ENCODE measurements at regions of chr19 and their contacts with region 1.

Region 1: DNA sequence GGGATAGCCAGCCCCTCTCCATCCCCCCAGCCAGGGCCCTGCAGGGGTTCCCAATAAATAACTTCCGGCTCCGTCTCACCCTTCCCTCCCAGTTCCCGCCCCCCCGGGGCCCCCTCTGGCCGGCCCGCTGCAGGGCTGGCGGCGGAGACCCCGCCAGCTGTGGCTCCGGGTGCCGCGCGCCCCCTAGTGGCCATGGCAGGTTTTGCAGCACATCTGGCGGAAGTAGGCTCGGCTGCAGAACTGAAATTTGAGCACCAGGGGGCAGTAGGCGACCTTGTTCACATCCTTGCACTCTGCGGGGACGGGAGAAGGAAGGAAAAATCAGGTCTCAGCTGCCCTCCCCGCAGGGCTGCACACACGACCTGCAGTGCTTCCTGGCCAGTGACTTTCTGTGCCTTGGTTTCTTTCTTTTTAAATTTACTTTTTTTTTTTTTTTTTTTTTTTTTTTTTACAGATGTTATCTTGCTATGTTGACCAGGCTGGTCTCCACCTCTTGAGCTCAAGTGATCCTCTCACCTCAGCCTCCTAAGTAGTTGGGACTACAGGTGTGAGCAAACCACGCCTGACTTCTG is 3.6 kb upstream of the MYO1F start:
- DNase-seq: peak; percentile 56
- ATAC-seq: peak; percentile 84
- H3K4me3 ChIP-seq: no peak overlapping the region
- H3K27ac ChIP-seq: no peak overlapping the region
- H3K4me1 ChIP-seq: peaks cover 23 to 24% of the 10 kb centered on the region in 2 experiments
- H3K27me3 ChIP-seq: peaks cover 7% of the 10 kb centered on the region; the same call in 1 of the 2 replicates
- CTCF ChIP-seq: peak; percentile 99 to 100 (median 100)
- POLR2A ChIP-seq: no peak
- RAD21 ChIP-seq: peak; percentile 89

Region 2: DNA sequence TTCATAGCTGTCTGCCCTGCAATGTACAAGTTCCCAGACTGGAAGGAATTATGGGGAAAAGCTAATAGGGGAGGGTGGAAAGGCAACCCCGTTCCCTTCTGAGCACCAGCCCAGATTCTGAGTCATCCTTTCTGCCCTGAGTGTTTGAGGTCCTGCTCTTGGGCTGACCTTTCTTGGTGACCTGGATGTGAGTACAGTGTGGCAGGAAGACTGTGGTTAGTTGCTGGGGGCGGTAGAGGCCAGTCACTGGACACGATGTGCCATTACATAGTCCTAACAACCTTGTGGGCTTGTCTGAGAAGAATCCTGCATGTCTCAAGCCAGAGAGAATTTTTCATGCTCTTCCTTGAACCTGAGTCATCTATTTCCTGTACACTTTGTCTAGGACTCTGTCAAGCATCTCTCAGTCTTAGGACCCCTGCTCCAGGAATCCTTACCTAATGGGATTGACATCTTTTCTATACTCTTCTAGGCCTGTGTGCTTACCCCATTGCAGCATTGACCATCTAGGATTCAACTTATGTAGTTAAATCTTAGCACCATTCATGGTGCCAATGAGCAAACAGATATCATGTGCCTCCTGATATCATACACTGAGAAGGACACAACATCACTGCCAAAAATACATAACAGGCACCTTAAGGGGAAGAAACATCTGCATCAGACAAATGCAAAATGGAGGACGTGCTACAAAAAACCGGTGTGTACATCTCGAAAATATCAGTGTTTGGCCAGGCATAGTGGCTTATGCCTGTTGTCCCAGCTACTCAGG is 225.0 kb before region 1 on chr19:
- CTCF ChIA-PET with region 1: interaction called, 41 read pairs
- POLR2A ChIA-PET with region 1: no interaction called
- RAD21 ChIA-PET with region 1: interaction called in 1 of 2 experiments, 4 read pairs
- intact Hi-C with region 1: loop called (anchors 5 kb)
- DNase-seq: peak; percentile 70
- ATAC-seq: peak; percentile 73
- H3K4me3 ChIP-seq: peak overlapping the region in 1 of 2 experiments; percentile 6; a peak in 2 of 4 replicates
- H3K27ac ChIP-seq: peak overlapping the region; percentile 34
- H3K4me1 ChIP-seq: peaks cover 32 to 62% of the 10 kb centered on the region in 2 experiments
- H3K27me3 ChIP-seq: no peaks in the 10 kb centered on the region
- CTCF ChIP-seq: no peak
- POLR2A ChIP-seq: no peak
- RAD21 ChIP-seq: peak; percentile 54

Region 3: GRCh38 chr19:8526345-8527067 is 54.3 kb before region 1 on chr19:
- CTCF ChIA-PET with region 1: interaction called, 10 read pairs
- POLR2A ChIA-PET with region 1: no interaction called
- RAD21 ChIA-PET with region 1: interaction called in 1 of 2 experiments, 4 read pairs
- intact Hi-C with region 1: no loop called
- DNase-seq: peak; percentile 75
- ATAC-seq: peak; percentile 70
- H3K4me3 ChIP-seq: peak overlapping the region; percentile 63 to 89
- H3K27ac ChIP-seq: peak overlapping the region; percentile 66
- H3K4me1 ChIP-seq: peaks cover 3 to 20% of the 10 kb centered on the region in 2 experiments; a peak in 3 of 4 replicates
- H3K27me3 ChIP-seq: no peaks in the 10 kb centered on the region
- CTCF ChIP-seq: no peak
- POLR2A ChIP-seq: peak; percentile 35
- RAD21 ChIP-seq: no peak

Region 4: DNA sequence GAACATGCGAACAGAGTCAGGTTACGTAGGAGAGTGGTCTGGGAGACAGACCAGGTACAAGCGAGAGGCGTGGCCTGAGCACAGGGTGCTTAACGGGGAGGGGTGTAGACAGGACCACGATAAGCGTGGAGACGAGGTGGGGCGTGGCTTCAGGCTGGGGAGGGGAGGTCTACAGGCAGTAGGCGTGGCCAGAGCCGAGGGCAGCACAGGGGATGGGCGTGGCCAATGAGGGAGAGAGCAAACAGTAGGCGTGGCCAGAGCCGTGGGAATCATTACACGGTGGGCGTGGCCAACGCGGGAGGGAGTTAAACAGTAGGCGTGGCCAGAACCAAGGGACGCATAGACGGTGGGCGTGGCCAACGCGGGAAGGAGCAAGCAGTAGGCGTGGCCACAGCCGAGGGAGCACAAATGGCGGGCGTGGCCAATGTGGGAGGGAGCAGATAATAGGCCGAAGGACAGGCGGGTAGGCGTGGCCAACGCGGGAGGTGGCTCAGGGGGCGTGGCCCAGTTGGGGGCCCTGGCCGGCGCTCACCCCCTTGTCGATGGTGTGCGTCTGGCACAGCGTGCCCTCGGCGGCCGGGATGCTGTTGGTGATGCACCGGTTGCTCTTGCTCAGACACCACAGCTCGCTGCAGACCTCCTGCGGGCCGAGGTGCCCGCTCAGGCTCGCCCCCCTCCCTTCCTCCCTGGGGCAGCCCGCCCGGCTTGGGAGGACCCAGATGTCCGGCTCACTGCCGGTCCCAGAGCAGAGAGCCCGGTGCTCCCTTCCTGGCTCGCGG is 11.6 kb after region 1 on chr19:
- CTCF ChIA-PET with region 1: interaction called, 20 read pairs
- POLR2A ChIA-PET with region 1: no interaction called
- RAD21 ChIA-PET with region 1: no interaction called
- intact Hi-C with region 1: no loop called
- DNase-seq: no peak
- ATAC-seq: peak; percentile 84
- H3K4me3 ChIP-seq: no peak overlapping the region
- H3K27ac ChIP-seq: no peak overlapping the region; the same call in 1 of the 2 replicates
- H3K4me1 ChIP-seq: peaks cover 3 to 5% of the 10 kb centered on the region in 2 experiments; a peak in 2 of 4 replicates
- H3K27me3 ChIP-seq: no peaks in the 10 kb centered on the region
- CTCF ChIP-seq: no peak
- POLR2A ChIP-seq: no peak
- RAD21 ChIP-seq: no peak

Region 5: GRCh38 chr19:8607386-8607785 is 26.6 kb after region 1 on chr19:
- CTCF ChIA-PET with region 1: no interaction called
- POLR2A ChIA-PET with region 1: no interaction called
- RAD21 ChIA-PET with region 1: no interaction called
- intact Hi-C with region 1: no loop called
- DNase-seq: no peak
- ATAC-seq: no peak
- H3K4me3 ChIP-seq: no peak overlapping the region
- H3K27ac ChIP-seq: no peak overlapping the region
- H3K4me1 ChIP-seq: peaks cover 10 to 31% of the 10 kb centered on the region in 2 experiments
- H3K27me3 ChIP-seq: no peaks in the 10 kb centered on the region
- CTCF ChIP-seq: no peak
- POLR2A ChIP-seq: no peak
- RAD21 ChIP-seq: no peak

Region 6: DNA sequence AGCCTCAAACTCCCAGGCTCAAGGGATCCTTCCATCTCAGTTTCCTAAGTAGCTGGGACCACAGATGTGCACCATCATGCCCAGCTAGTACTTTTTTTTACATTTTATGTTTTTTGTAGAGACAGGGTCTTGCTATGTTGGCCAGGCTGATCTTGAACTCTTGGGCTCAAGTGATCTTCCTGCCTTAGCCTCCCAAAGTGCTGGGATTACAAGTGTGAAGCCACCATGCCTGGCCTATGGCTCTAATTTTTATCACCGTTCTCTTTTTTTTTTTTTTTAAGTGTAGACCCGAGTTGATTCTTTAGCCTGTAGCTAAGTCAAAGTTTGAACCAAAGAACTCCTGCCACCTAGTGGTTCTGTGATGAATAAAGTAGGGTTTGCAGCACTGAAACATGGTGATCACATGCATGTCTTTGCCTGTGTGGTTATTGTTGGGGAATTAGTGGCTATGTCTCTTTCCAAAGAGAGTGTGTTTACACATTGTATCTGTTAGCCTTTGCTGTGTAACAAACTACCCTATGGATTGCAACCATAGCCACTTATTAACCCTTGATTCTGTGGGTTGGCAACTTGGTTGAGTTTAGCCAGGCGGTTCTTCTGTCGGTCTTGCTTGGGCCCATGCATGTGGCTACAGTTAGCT is 61.2 kb after region 1 on chr19:
- CTCF ChIA-PET with region 1: interaction called, 28 read pairs
- POLR2A ChIA-PET with region 1: no interaction called
- RAD21 ChIA-PET with region 1: interaction called in 1 of 2 experiments, 3 read pairs
- intact Hi-C with region 1: loop called (anchors 2 kb)
- DNase-seq: peak; percentile 51
- ATAC-seq: peak; percentile 84
- H3K4me3 ChIP-seq: no peak overlapping the region
- H3K27ac ChIP-seq: no peak overlapping the region
- H3K4me1 ChIP-seq: no peaks in the 10 kb centered on the region
- H3K27me3 ChIP-seq: no peaks in the 10 kb centered on the region
- CTCF ChIP-seq: peak; percentile 68 to 76 (median 70); a peak in 5 of 6 replicates
- POLR2A ChIP-seq: no peak
- RAD21 ChIP-seq: peak; percentile 63